Mammary epithelial cell (primary cell): ENCODE measurements at regions of chr1 and their contacts with region 1.

Region 1: DNA sequence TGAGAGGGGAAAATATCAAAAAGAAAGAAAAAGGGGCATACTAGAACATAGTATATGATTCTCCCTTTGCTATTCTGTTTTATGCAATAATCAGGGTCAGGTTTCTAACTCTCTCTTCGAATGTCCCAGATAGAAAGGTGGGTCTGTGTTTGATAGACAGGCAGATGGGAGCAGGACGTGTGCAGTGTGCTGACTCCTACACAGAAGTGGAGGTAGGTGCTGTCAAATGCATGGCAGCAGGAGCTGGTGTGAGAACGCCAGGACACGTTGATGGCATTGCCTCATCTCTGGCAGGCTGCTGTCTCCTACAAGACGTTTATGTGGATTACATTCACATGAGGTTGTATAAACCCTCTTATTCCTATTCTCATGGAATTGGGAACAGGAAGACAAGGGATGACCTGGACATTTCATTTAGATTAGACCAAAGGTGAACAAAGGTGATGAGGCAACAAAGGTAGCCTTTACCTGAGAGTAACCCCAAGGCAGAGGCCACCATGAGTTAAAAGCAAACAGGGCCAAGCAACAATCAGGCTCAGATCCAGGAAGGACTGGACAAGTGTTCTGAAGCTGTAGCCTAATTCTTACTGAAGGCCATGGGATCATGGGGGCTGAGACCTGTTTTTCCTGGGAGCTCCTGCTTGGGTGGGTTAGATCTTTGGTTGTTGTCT is 37.8 kb downstream of the KCNK1 start:
- DNase-seq: no peak
- H3K4me3 ChIP-seq: no peak overlapping the region
- H3K27ac ChIP-seq: no peak overlapping the region
- H3K4me1 ChIP-seq: peaks cover 16% of the 10 kb centered on the region
- H3K27me3 ChIP-seq: no peaks in the 10 kb centered on the region
- CTCF ChIP-seq: no peak

Region 2: GRCh38 chr1:233229288-233229687 is 422.4 kb before region 1 on chr1:
- CTCF ChIA-PET with region 1: no interaction called
- dilution Hi-C with region 1: no loop called
- in situ Hi-C with region 1: no loop called
- intact Hi-C with region 1: no loop called
- DNase-seq: no peak
- H3K4me3 ChIP-seq: no peak overlapping the region
- H3K27ac ChIP-seq: no peak overlapping the region
- H3K4me1 ChIP-seq: no peaks in the 10 kb centered on the region
- H3K27me3 ChIP-seq: no peaks in the 10 kb centered on the region
- CTCF ChIP-seq: no peak

Region 3: GRCh38 chr1:233625510-233625981 is 26.2 kb before region 1 on chr1:
- CTCF ChIA-PET with region 1: no interaction called
- dilution Hi-C with region 1: no loop called
- in situ Hi-C with region 1: no loop called
- intact Hi-C with region 1: loop called (anchors 1 kb)
- DNase-seq: no peak
- H3K4me3 ChIP-seq: no peak overlapping the region
- H3K27ac ChIP-seq: no peak overlapping the region
- H3K4me1 ChIP-seq: no peaks in the 10 kb centered on the region
- H3K27me3 ChIP-seq: no peaks in the 10 kb centered on the region
- CTCF ChIP-seq: no peak

Region 4: GRCh38 chr1:234427950-234428642 is 776.4 kb after region 1 on chr1:
- CTCF ChIA-PET with region 1: no interaction called
- dilution Hi-C with region 1: no loop called
- in situ Hi-C with region 1: no loop called
- intact Hi-C with region 1: no loop called
- DNase-seq: no peak
- H3K4me3 ChIP-seq: no peak overlapping the region
- H3K27ac ChIP-seq: no peak overlapping the region
- H3K4me1 ChIP-seq: no peaks in the 10 kb centered on the region
- H3K27me3 ChIP-seq: no peaks in the 10 kb centered on the region
- CTCF ChIP-seq: no peak